Ovary (tissue), 10 donors: ENCODE measurements at regions of chrX and their contacts with region 1.

Region 1: DNA sequence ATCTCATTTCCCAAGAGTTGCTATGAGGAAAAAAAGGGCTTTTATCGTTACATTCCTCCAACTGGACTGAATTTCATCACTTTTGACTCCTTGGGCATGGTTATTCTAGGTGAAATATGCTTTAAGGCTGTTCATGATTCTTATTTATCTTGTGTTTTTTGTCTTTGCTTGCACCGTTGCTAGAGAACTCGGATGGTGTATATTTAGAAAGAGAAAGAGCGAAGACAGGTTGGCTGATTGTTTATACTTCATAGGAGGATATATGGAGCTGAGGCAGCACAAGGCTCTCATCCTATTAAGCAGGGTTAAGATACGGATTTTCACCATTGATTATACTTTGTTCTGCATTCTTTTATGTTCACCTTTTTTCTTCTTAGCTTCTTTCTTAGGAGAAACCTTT is 94.9 kb upstream of the GEMIN8 start:
- DNase-seq: no peak
- H3K4me3 ChIP-seq: no peak overlapping the region
- H3K27ac ChIP-seq: no peak overlapping the region
- H3K4me1 ChIP-seq: no peaks in the 10 kb centered on the region
- H3K27me3 ChIP-seq: no peaks in the 10 kb centered on the region
- CTCF ChIP-seq: no peak
- EP300 ChIP-seq: no peak
- POLR2A ChIP-seq: no peak

Region 2: DNA sequence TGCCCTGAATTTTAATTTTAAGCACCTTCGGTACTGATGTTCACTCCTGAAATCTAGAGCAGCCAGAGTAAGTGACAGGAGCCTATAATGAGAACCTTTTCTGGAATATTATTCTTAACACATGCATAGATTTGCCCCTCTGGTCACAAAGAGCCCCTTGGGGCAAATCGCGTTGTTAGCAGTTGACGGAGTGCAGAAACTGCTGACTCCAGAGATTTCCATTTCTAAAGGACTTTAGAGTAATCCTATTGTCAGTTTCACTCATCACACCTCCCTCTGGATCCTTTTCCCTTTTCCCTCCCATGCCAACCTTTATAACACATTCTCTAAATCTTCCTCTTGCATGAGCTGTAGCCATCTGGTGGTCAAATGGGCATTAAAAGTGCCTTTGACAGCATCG is 1598.3 kb before region 1 on chrX:
- intact Hi-C with region 1: loop called in 1 of 4 experiments (anchors 10 kb)
- DNase-seq: no peak
- H3K4me3 ChIP-seq: no peak overlapping the region
- H3K27ac ChIP-seq: no peak overlapping the region
- H3K4me1 ChIP-seq: no peaks in the 10 kb centered on the region
- H3K27me3 ChIP-seq: no peaks in the 10 kb centered on the region
- CTCF ChIP-seq: no peak
- EP300 ChIP-seq: no peak
- POLR2A ChIP-seq: no peak

Region 3: GRCh38 chrX:14010566-14010965 is 114.0 kb before region 1 on chrX:
- intact Hi-C with region 1: no loop called
- DNase-seq: no peak
- H3K4me3 ChIP-seq: no peak overlapping the region
- H3K27ac ChIP-seq: no peak overlapping the region
- H3K4me1 ChIP-seq: peaks cover 2% of the 10 kb centered on the region
- H3K27me3 ChIP-seq: no peaks in the 10 kb centered on the region
- CTCF ChIP-seq: no peak
- EP300 ChIP-seq: no peak
- POLR2A ChIP-seq: no peak

Region 4: GRCh38 chrX:14064626-14065432 is 59.7 kb before region 1 on chrX:
- intact Hi-C with region 1: no loop called
- DNase-seq: no peak
- H3K4me3 ChIP-seq: no peak overlapping the region
- H3K27ac ChIP-seq: no peak overlapping the region
- H3K4me1 ChIP-seq: no peaks in the 10 kb centered on the region
- H3K27me3 ChIP-seq: no peaks in the 10 kb centered on the region
- CTCF ChIP-seq: no peak
- EP300 ChIP-seq: no peak
- POLR2A ChIP-seq: no peak

Region 5: GRCh38 chrX:14235004-14235403 is 110.4 kb after region 1 on chrX:
- intact Hi-C with region 1: no loop called
- DNase-seq: no peak
- H3K4me3 ChIP-seq: no peak overlapping the region
- H3K27ac ChIP-seq: no peak overlapping the region
- H3K4me1 ChIP-seq: no peaks in the 10 kb centered on the region
- H3K27me3 ChIP-seq: no peaks in the 10 kb centered on the region
- CTCF ChIP-seq: no peak
- EP300 ChIP-seq: no peak
- POLR2A ChIP-seq: no peak